ENCODE measurements at regions of chr12 and their contacts with region 1.

Region 1: GRCh38 chr12:10501031-10501430 is 4.7 kb upstream of the EIF2S3B start:
- DNase-seq: peak; percentile 25
- ATAC-seq: no peak
- H3K4me3 ChIP-seq: no peak overlapping the region
- H3K27ac ChIP-seq: no peak overlapping the region
- H3K4me1 ChIP-seq: no peaks in the 10 kb centered on the region
- H3K27me3 ChIP-seq: no peaks in the 10 kb centered on the region
- CTCF ChIP-seq: peak; percentile 47

Region 2: GRCh38 chr12:10331642-10332239 is 169.3 kb before region 1 on chr12:
- CTCF ChIA-PET with region 1: no interaction called
- POLR2A ChIA-PET with region 1: no interaction called
- intact Hi-C with region 1: loop called (anchors 1 kb)
- DNase-seq: peak; percentile 67
- ATAC-seq: peak; percentile 81
- H3K4me3 ChIP-seq: no peak overlapping the region
- H3K27ac ChIP-seq: no peak overlapping the region
- H3K4me1 ChIP-seq: 0 out of 2 replicates have a peak, but pooled peaks cover 2% of the 10 kb centered on the region
- H3K27me3 ChIP-seq: no peaks in the 10 kb centered on the region
- CTCF ChIP-seq: peak; percentile 83